IMR-90 (cell line): ENCODE measurements at regions of chrX and their contacts with region 1.

Region 1: DNA sequence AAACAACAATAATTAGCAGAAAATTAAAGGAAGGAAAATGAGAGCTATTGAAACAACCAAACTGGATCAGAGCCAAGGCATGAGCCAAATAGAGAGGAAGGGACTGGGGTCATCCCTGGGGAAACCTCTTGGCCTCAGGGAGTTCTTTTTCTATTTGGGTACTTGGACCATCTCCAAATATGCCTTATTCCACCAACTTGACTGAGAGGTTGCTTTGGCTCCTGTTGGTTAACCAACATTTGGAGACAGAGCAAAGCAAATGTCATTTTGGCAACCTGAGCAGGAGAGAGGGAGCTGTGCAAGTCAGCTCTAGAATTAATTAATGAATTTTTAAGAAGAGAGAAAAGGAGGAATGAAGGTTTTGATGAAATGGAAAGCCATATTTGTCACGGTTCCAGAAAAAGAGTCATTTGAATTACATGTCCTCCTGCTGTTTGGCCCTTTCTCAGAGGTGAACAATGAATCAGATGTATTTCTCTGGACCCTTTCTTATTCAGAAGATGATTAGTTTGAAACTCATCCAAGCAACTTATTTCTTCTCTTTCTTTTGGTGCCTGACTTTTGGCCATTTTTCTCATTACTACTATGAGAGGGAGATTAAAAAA is 119.1 kb downstream of the CNKSR2 start:
- DNase-seq: peak; percentile 47
- ATAC-seq: no peak
- H3K4me3 ChIP-seq: no peak overlapping the region
- H3K27ac ChIP-seq: no peak overlapping the region
- H3K4me1 ChIP-seq: no peaks in the 10 kb centered on the region
- H3K27me3 ChIP-seq: no peaks in the 10 kb centered on the region
- CTCF ChIP-seq: no peak
- POLR2A ChIP-seq: no peak
- RAD21 ChIP-seq: no peak

Region 2: GRCh38 chrX:20906571-20906970 is 586.8 kb before region 1 on chrX:
- CTCF ChIA-PET with region 1: no interaction called
- POLR2A ChIA-PET with region 1: no interaction called
- dilution Hi-C with region 1: no loop called
- in situ Hi-C with region 1: no loop called
- intact Hi-C with region 1: no loop called
- DNase-seq: no peak
- ATAC-seq: no peak
- H3K4me3 ChIP-seq: no peak overlapping the region
- H3K27ac ChIP-seq: no peak overlapping the region
- H3K4me1 ChIP-seq: no peaks in the 10 kb centered on the region
- H3K27me3 ChIP-seq: no peaks in the 10 kb centered on the region
- CTCF ChIP-seq: no peak
- POLR2A ChIP-seq: no peak
- RAD21 ChIP-seq: no peak

Region 3: GRCh38 chrX:21354725-21355124 is 138.6 kb before region 1 on chrX:
- CTCF ChIA-PET with region 1: no interaction called
- POLR2A ChIA-PET with region 1: no interaction called
- dilution Hi-C with region 1: no loop called
- in situ Hi-C with region 1: no loop called
- intact Hi-C with region 1: no loop called
- DNase-seq: no peak
- ATAC-seq: no peak
- H3K4me3 ChIP-seq: no peak overlapping the region
- H3K27ac ChIP-seq: no peak overlapping the region
- H3K4me1 ChIP-seq: no peaks in the 10 kb centered on the region
- H3K27me3 ChIP-seq: no peaks in the 10 kb centered on the region
- CTCF ChIP-seq: no peak
- POLR2A ChIP-seq: no peak
- RAD21 ChIP-seq: no peak

Region 4: GRCh38 chrX:21438792-21439191 is 54.5 kb before region 1 on chrX:
- CTCF ChIA-PET with region 1: no interaction called
- POLR2A ChIA-PET with region 1: no interaction called
- dilution Hi-C with region 1: no loop called
- in situ Hi-C with region 1: no loop called
- intact Hi-C with region 1: loop called (anchors 10 kb)
- DNase-seq: no peak
- ATAC-seq: no peak
- H3K4me3 ChIP-seq: no peak overlapping the region
- H3K27ac ChIP-seq: no peak overlapping the region
- H3K4me1 ChIP-seq: no peaks in the 10 kb centered on the region
- H3K27me3 ChIP-seq: no peaks in the 10 kb centered on the region
- CTCF ChIP-seq: no peak
- POLR2A ChIP-seq: no peak
- RAD21 ChIP-seq: no peak